Heart right ventricle (tissue), 16 donors: ENCODE measurements at regions of chr16 and their contacts with region 1.

Region 1: DNA sequence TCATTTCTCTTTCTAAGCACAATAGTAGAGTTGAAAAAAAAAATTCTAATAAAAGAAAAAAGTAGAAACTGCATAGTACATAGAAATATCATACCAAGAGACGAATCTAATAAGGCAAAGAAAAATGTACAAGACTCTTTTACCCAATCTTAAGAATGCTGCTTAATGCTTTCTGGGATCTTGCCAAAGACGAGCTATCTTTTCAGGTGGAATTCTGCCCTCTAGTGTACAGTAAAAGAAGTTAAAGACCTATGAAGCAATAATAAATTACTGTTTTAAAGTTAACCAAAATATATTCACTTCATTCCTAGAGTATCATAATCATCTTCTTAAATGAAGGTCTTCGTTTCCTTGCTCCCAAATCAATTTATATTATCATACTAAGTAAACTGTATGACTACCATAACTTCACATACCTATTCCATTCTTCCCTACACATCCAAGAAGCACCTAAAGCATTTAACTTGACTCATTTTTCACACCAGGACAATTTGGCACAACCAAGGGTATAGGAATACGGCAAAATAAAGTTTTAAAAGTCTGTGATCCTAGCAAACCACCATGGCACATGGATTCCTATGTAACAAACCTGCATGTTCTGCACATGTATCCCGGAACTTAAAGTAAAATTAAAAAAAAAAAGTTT is 47.7 kb downstream of the CFDP1 start:
- DNase-seq: peak in 1 of 2 donors; percentile 36
- ATAC-seq: peak in 1 of 8 donors; percentile 50
- H3K4me3 ChIP-seq: no peak overlapping the region
- H3K27ac ChIP-seq: no peak overlapping the region
- H3K4me1 ChIP-seq: peaks cover 0 to 50% (median 20%) of the 10 kb centered on the region in 9 donors
- H3K27me3 ChIP-seq: peaks cover 0 to 32% (median 0%) of the 10 kb centered on the region in 7 donors
- CTCF ChIP-seq: peak; percentile 67 to 84 (median 72)

Region 2: GRCh38 chr16:74795104-74795503 is 590.5 kb before region 1 on chr16:
- intact Hi-C with region 1: no loop called
- DNase-seq: no peak
- ATAC-seq: no peak
- H3K4me3 ChIP-seq: no peak overlapping the region
- H3K27ac ChIP-seq: no peak overlapping the region
- H3K4me1 ChIP-seq: no peaks in the 10 kb centered on the region
- H3K27me3 ChIP-seq: peaks cover 0 to 45% (median 7%) of the 10 kb centered on the region in 7 donors
- CTCF ChIP-seq: no peak

Region 3: DNA sequence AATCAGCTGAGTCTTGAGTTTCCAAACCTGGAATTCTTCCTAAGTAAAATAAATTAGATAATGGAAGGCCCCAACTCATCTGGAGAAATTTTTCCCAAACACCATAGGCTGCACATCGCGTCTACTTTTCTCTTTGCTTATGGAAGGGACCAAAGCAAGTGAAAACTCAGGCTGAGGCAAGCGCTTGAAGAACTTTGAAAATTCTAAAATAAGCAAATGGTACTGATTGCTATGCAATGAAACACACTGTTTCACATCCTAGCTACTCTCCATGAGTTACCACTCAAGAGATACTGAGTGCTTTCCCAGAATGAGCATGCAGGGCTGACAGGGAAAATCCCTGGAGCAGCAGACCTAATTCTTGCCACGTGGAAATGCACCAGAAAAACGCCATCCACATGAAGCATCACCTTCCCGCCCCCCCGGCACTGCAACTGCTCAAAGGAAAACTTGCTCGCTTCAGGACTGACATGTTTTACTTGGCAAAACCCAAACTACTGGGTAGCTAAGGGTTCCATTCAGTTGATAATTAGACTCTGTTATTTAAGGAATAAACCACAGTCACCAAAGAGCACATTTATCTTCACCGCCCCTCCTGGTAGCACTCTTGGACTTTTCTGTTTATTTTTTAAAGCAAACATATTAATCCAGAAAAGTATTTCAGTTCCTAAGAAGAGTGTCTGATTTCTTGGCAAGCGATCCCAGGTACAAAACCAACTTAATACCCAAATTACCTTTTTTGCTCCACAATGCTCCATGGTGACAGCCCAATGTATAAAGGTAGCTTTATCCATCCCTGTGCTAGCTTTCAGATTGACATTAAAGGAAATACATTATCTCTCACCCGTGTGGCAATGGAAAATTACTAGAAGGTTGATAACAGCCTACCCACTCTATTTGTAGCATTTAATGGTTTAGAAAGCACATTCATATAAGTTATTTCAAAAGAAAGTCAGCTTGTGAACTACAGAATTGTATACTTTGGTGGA is 463.2 kb before region 1 on chr16:
- intact Hi-C with region 1: no loop called
- DNase-seq: no peak
- ATAC-seq: peak in 4 of 8 donors; percentile 39 to 58 (median 42)
- H3K4me3 ChIP-seq: no peak overlapping the region
- H3K27ac ChIP-seq: no peak overlapping the region
- H3K4me1 ChIP-seq: peaks cover 0 to 22% (median 3%) of the 10 kb centered on the region in 9 donors
- H3K27me3 ChIP-seq: no peaks in the 10 kb centered on the region
- CTCF ChIP-seq: no peak

Region 4: DNA sequence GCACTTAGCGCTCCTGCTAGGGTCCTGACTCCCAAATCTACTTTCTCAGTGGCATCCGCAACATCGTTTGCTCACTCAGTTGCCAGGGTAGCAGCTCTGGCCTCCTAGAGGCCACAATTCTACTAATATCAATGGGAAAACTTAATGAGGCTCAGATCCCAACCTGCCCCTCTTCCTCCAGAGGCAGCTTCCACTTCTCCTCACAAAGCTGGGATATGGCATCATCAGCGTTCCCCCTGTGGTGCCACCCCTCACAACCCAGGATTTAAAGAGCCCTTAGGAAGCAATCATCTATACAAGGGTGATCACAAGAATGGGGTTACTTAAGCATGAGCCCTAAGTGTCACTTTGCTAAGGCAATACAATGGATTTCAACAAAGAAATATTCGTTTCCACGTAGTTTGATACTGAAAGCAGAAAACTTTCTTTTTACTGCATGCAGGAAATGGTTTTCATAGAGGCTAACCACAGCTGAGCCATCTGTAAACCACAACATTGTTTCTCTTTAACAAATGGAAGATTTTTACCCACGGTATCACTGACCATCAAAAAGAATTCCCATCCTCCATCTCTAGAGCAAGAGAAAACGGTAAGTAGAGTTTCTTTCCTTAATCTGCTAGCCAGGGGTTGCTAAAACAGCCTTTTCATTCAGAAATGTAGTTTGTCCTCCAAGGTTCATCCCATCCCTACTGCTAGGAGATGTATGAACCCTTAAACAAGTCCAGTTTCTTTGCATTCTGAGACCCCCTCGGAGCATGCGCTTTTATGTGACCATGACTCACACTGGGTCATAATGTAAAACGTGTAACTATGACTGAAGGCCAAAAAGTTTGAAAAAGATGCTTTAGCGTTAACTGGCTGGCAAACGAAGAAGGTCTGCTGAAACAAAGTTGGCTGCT is 65.9 kb before region 1 on chr16:
- intact Hi-C with region 1: loop called in 1 of 10 experiments (anchors 10 kb)
- DNase-seq: no peak
- ATAC-seq: no peak
- H3K4me3 ChIP-seq: no peak overlapping the region
- H3K27ac ChIP-seq: peak overlapping the region in 5 of 10 donors; percentile 8 to 77 (median 24)
- H3K4me1 ChIP-seq: peaks cover 0 to 47% (median 8%) of the 10 kb centered on the region in 9 donors
- H3K27me3 ChIP-seq: peaks cover 0 to 71% (median 0%) of the 10 kb centered on the region in 7 donors
- CTCF ChIP-seq: no peak